ENCODE measurements at regions of chr1 and their contacts with region 1.

Region 1: GRCh38 chr1:145996433-145997015 is at the start of gene TXNIP:
- DNase-seq: peak; percentile 99 to 100
- ATAC-seq: peak; percentile 61 to 74
- H3K4me3 ChIP-seq: peak within 1 kb of the TSS; percentile 63 to 98 (median 81)
- H3K27ac ChIP-seq: peak within 1 kb of the TSS; percentile 95 to 99 (median 98)
- H3K4me1 ChIP-seq: peaks cover 8 to 25% of the 10 kb centered on the region in 2 donors
- H3K27me3 ChIP-seq: no peaks in the 10 kb centered on the region
- CTCF ChIP-seq: no peak
- POLR2A ChIP-seq: peak; percentile 94 to 96
- total RNA-seq, gene TXNIP: 1,815 to 2,839 (median 2,202) TPM

Region 2: DNA sequence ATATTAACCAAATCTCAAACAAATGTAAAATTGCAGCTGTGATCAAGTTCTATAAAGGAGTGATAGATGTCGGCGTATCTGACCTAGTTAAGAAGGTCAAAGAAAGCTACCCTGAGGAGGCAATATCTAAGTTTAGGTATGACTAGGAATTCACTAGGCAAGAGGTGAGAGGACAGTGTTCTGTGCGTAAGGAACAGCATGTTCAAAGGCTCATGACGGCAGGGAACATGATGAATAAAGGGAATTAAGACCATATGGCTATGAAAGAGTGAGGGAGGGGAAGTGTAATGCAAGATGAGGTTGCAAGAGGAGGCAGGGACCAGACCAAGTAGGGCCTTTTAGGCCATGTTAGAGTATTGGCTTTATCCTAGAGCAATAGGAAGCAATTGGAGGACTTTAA is 47.3 kb before region 1 on chr1:
- in situ Hi-C with region 1: no loop called
- intact Hi-C with region 1: loop called (anchors 5 kb)
- DNase-seq: peak; percentile 58 to 84
- ATAC-seq: peak; percentile 94 to 97
- H3K4me3 ChIP-seq: no peak overlapping the region
- H3K27ac ChIP-seq: peak overlapping the region; percentile 88 to 99 (median 96)
- H3K4me1 ChIP-seq: peaks cover 72 to 76% of the 10 kb centered on the region in 2 donors
- H3K27me3 ChIP-seq: no peaks in the 10 kb centered on the region
- CTCF ChIP-seq: no peak
- POLR2A ChIP-seq: peak; percentile 48 to 70

Measured in gastrocnemius medialis (tissue), 4 donors.